ENCODE measurements at regions of chr7 and their contacts with region 1.

Region 1: GRCh38 chr7:121994625-121995410 is 121.9 kb downstream of the PTPRZ1 start:
- DNase-seq: peak; percentile 68
- H3K4me3 ChIP-seq: no peak overlapping the region
- H3K27ac ChIP-seq: no peak overlapping the region
- H3K4me1 ChIP-seq: no peaks in the 10 kb centered on the region
- H3K27me3 ChIP-seq: no peaks in the 10 kb centered on the region
- CTCF ChIP-seq: peak; percentile 66

Region 2: DNA sequence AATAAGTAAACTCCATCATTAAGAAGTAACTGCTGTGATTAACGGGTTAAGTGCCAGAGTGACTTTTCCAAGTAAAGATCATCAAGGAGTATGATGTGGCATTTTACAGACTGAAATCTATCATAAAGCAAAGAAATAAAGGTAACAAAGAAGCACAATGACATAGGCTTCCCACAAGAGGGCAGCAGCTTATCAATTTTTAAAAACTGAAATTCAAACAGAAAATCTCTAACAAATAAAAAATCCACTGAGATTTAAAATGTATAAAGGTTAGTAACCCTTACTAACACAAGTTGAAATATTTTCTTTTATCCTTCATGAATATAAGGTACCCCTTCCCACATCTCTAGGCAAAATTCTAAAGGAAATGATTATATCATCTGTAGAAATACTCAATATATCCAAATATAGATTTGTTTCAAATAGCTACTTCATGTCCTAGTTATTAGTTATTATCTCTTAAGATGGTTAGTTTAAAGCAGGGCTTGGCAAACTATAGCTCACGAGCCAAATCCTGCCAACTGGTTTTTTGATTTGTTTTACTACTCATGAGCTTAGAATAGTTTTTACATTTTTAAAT is 627.9 kb before region 1 on chr7:
- intact Hi-C with region 1: loop called (anchors 5 kb)
- DNase-seq: no peak
- H3K4me3 ChIP-seq: no peak overlapping the region
- H3K27ac ChIP-seq: no peak overlapping the region
- H3K4me1 ChIP-seq: no peaks in the 10 kb centered on the region
- H3K27me3 ChIP-seq: no peaks in the 10 kb centered on the region
- CTCF ChIP-seq: peak; percentile 63

Region 3: DNA sequence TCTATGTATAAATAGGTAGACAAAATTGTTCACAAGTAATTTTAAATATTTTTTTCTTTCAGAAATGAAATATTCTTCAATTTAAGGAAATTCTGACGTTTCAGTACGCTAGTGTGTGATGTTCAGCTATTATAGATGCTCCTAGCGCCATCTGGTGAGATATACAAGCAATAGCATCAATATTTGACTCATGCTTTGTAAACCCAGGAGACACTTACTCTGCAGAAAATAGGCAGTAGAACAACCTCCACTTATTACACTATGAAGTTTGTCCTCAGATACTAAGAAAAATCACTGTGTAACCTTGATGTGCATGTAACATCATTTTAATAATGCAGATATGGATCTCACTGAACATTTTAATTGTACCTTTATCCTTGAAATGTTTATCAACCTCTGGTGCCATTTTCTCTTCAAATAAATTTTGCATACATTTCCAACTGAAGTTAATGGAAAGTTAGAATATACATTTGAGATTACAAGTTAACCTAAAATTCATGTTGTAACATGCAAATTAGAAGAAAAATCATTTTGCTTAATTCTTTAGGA is 447.2 kb before region 1 on chr7:
- intact Hi-C with region 1: loop called (anchors 10 kb)
- DNase-seq: no peak
- H3K4me3 ChIP-seq: no peak overlapping the region
- H3K27ac ChIP-seq: no peak overlapping the region
- H3K4me1 ChIP-seq: no peaks in the 10 kb centered on the region
- H3K27me3 ChIP-seq: no peaks in the 10 kb centered on the region
- CTCF ChIP-seq: peak; percentile 76

Region 4: DNA sequence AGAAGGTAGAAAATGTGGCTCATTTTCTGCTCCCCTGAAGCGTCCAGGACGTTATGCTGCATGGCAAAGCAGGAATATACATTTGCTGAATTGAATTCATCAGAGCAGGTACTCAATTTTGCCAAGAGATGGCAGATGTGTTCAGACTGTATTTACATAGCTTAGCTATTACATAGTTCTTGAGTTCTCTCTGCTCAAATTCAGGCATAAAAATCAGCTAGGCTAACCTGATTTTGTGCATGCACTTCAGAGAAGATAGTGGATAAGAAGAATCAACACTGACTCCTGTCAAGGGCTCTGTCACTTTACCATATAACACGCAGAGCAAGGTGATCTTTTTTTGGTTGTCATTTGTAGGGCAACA is 389.5 kb before region 1 on chr7:
- intact Hi-C with region 1: loop called (anchors 5 kb)
- DNase-seq: no peak
- H3K4me3 ChIP-seq: no peak overlapping the region
- H3K27ac ChIP-seq: no peak overlapping the region
- H3K4me1 ChIP-seq: no peaks in the 10 kb centered on the region
- H3K27me3 ChIP-seq: no peaks in the 10 kb centered on the region
- CTCF ChIP-seq: no peak

Region 5: GRCh38 chr7:122100021-122100420 is 105.2 kb after region 1 on chr7:
- intact Hi-C with region 1: no loop called
- DNase-seq: no peak
- H3K4me3 ChIP-seq: no peak overlapping the region
- H3K27ac ChIP-seq: no peak overlapping the region
- H3K4me1 ChIP-seq: no peaks in the 10 kb centered on the region
- H3K27me3 ChIP-seq: no peaks in the 10 kb centered on the region
- CTCF ChIP-seq: no peak

Measured in colonic mucosa (tissue), 4 donors.